ENCODE measurements at regions of chr14 and their contacts with region 1.

Region 1: GRCh38 chr14:71555654-71556559 is 376.3 kb upstream of the RGS6 start:
- DNase-seq: peak; percentile 65
- H3K4me3 Mint-ChIP-seq: peak overlapping the region; percentile 35
- H3K27ac Mint-ChIP-seq: peak overlapping the region; percentile 92
- H3K4me1 Mint-ChIP-seq: peaks cover 71% of the 10 kb centered on the region
- H3K27me3 Mint-ChIP-seq: no peaks in the 10 kb centered on the region

Region 2: GRCh38 chr14:71138448-71139293 is 417.2 kb before region 1 on chr14:
- intact Hi-C with region 1: loop called (anchors 1 kb)
- DNase-seq: peak; percentile 48
- H3K4me3 Mint-ChIP-seq: no peak overlapping the region
- H3K27ac Mint-ChIP-seq: no peak overlapping the region
- H3K4me1 Mint-ChIP-seq: peaks cover 48% of the 10 kb centered on the region
- H3K27me3 Mint-ChIP-seq: no peaks in the 10 kb centered on the region

Region 3: DNA sequence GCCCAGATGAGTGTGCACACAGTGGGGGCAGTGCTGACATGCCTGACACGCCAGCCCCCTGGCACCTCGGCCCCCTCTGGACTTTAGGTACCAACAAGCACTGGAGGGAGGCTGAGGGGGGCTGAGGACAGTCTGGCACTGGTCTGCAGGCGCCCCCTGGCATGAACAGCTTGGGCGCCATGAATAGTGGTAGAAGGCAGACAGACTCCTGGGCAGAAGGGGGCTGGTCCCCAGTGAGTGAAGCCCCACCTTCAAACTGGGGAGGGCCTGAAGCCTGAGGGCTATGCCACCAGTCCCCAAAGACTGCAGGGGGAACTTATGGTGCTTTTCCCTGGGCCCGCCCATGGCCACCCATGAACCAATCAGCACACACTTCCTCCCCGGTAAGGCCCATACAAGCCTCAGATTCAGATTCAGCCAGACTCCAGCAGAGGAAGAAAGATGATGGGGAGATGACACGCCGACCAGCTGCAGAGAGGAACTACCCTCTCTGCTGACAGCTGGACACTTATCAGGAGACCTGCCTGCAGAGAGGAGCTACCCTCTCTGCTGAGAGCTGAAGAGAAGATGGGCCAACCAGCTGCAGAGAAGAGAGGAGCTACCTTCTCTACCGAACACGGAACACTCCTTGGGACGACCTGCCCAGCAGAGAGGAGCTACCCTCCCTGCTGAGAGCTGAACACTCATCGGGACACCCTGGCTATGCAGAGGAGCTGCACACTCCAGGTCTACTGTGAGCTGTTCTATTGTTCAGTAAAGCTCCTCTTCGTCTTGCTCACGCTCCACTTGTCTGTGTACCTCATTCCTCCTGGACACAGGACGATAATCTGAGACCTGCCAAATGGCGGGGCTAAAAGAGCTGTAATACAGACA is 324.1 kb before region 1 on chr14:
- intact Hi-C with region 1: no loop called
- DNase-seq: no peak
- H3K4me3 Mint-ChIP-seq: no peak overlapping the region
- H3K27ac Mint-ChIP-seq: no peak overlapping the region
- H3K4me1 Mint-ChIP-seq: peaks cover 8% of the 10 kb centered on the region
- H3K27me3 Mint-ChIP-seq: peaks cover 14% of the 10 kb centered on the region

Region 4: GRCh38 chr14:71320107-71320733 is 235.7 kb before region 1 on chr14:
- intact Hi-C with region 1: loop called (anchors 2 kb)
- DNase-seq: peak; percentile 99
- H3K4me3 Mint-ChIP-seq: peak within 1 kb of the TSS; percentile 92
- H3K27ac Mint-ChIP-seq: peak within 1 kb of the TSS; percentile 91
- H3K4me1 Mint-ChIP-seq: peaks cover 42% of the 10 kb centered on the region
- H3K27me3 Mint-ChIP-seq: no peaks in the 10 kb centered on the region

Region 5: DNA sequence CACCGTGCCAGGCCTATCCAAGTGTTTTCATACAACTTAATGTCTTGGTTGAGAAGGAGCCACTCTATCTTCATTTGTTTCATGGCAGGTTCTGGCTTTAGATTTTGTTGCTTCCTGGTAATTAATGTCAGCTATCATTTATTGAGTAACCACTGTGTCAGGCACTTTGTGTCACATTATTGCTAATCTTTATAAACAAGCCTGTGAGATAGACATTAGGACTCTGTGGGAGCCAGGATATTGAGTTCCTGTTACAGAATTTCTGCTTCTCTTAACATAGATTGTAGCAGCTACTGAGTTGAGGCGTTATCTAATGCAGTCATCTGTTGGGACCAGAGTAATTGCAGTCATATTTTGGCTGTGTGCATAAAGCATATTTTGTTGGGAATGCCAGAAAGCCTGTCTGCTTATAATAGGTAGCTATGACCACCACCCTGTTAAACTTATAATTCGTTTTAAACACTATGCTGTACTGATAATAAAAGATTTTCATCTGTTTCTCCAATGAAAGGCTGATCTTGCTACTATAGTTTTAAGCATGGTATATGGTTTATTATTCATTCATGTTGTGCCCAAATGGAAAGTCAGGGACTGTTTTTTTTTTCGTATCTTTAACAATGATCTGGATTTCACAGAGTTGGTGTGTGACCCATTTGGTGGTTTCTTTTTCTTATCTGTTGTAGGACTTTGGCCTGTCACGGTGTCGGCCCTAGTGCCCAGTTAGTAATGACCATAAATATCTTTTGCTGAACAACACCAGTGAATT is 216.1 kb before region 1 on chr14:
- intact Hi-C with region 1: no loop called
- DNase-seq: no peak
- H3K4me3 Mint-ChIP-seq: no peak overlapping the region
- H3K27ac Mint-ChIP-seq: no peak overlapping the region
- H3K4me1 Mint-ChIP-seq: peaks cover 31% of the 10 kb centered on the region
- H3K27me3 Mint-ChIP-seq: no peaks in the 10 kb centered on the region

Region 6: DNA sequence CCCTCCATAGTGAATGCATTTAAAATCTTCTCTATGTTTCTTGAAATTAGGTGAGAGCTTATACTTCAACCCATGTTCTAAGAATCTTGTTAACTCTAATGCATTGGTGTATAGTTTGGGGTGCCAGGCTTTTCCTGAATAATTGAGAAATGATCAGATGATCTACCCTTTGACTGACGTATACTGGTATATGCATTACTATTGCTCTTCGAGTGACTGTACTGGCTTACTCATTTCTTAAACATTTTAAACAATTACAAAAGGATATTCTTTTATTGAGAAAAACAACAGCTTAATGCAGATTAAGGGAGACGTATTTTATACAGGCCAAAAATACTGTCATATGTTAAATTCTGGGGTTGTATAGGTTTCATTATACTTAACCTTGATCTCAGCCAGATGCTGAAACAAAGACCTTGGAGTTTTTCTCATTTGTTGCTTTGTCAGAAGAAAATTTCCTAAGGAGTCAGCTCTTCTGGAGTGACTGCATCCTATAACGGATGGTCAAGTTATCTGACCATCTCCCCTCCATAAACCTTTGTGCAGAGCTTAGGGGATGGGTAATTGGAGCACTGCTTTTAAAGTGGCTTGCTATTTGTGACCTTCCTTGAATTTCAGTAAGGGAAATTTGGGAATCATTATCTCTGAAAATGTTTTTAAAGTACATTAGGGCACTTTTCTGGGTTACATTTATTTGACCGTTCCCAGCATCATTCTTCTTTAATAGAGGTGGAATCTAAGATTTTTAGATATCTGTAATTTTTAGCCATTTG is 141.1 kb before region 1 on chr14:
- intact Hi-C with region 1: loop called (anchors 2 kb)
- DNase-seq: no peak
- H3K4me3 Mint-ChIP-seq: no peak overlapping the region
- H3K27ac Mint-ChIP-seq: no peak overlapping the region
- H3K4me1 Mint-ChIP-seq: peaks cover 38% of the 10 kb centered on the region
- H3K27me3 Mint-ChIP-seq: no peaks in the 10 kb centered on the region

Region 7: DNA sequence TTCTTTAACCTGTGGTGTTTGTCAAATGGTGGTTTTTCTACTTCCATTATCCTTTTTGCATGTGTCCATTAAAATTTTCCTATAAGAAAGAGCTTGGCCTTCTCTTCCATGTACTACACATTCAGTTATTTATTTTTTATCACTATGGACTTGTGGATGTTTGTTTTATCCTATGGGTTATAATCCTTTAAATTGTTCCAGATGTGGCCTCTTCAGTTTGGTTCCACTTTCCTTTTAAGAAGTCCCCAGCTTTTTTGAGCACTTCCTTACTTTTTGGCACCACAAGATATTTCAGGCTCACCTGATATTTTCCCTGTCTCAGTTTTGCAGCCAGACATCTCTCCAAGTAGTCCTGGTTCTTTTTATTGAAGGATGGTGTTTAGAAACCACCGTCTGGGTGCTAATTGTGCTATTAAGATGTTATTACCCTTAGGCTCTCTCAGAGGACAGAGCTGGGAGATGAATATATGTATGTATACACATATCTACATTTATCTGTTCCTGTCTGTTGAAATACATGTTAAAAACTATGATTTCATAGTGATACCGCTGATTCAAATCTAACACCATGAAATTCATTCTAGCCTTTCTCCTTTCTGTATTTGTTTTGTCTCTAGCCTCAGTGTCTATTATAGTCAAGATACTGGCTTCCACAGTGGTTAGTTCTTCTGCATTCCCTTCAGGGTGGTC is 32.1 kb before region 1 on chr14:
- intact Hi-C with region 1: loop called (anchors 1 kb)
- DNase-seq: no peak
- H3K4me3 Mint-ChIP-seq: no peak overlapping the region
- H3K27ac Mint-ChIP-seq: peak overlapping the region; percentile 63
- H3K4me1 Mint-ChIP-seq: peaks cover 28% of the 10 kb centered on the region
- H3K27me3 Mint-ChIP-seq: no peaks in the 10 kb centered on the region

Region 8: GRCh38 chr14:71566276-71566675 is 10.4 kb after region 1 on chr14:
- intact Hi-C with region 1: no loop called
- DNase-seq: no peak
- H3K4me3 Mint-ChIP-seq: no peak overlapping the region
- H3K27ac Mint-ChIP-seq: no peak overlapping the region
- H3K4me1 Mint-ChIP-seq: peaks cover 12% of the 10 kb centered on the region
- H3K27me3 Mint-ChIP-seq: no peaks in the 10 kb centered on the region

Region 9: DNA sequence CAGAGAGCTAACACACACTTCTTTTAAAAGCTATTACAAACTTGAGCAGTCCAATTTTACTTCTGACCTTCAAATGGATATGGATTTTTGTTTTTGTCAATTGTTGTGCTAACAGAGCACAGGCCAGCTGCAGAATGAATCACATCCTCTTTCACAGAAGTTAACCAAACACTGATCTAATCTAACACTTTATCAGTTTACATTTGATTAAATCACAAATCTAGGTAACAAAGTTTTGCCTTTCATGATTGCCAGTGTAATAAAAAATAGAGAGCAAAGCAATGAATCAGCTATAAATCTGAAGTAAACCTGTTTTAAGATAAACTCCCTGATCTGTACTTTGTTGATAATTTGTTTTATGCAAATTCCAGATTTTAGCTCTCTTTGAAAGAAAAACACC is 103.3 kb after region 1 on chr14:
- intact Hi-C with region 1: loop called (anchors 5 kb)
- DNase-seq: no peak
- H3K4me3 Mint-ChIP-seq: no peak overlapping the region
- H3K27ac Mint-ChIP-seq: peak overlapping the region; percentile 9
- H3K4me1 Mint-ChIP-seq: peaks cover 33% of the 10 kb centered on the region
- H3K27me3 Mint-ChIP-seq: no peaks in the 10 kb centered on the region

Region 10: DNA sequence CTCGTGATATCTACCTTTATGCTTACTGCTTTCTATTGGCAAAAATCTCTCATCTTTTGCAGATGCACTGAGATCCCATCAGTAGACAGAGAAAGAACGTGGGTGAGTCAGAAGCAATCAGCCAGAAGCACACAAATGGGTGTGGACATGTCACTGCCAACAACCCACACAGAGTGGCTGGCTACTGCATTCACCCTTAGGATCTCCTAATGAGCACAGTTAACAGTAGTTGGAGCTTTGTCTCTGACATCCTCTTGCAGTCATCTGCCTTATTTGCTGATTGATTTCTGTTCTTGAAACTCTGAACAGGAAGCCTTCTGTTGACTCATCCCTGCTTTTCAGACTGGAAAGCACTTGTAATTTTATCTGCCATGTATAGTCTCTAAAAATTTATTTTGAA is 493.5 kb after region 1 on chr14:
- intact Hi-C with region 1: loop called (anchors 10 kb)
- DNase-seq: peak; percentile 48
- H3K4me3 Mint-ChIP-seq: no peak overlapping the region
- H3K27ac Mint-ChIP-seq: peak overlapping the region; percentile 72
- H3K4me1 Mint-ChIP-seq: peaks cover 34% of the 10 kb centered on the region
- H3K27me3 Mint-ChIP-seq: peaks cover 15% of the 10 kb centered on the region

Region 11: DNA sequence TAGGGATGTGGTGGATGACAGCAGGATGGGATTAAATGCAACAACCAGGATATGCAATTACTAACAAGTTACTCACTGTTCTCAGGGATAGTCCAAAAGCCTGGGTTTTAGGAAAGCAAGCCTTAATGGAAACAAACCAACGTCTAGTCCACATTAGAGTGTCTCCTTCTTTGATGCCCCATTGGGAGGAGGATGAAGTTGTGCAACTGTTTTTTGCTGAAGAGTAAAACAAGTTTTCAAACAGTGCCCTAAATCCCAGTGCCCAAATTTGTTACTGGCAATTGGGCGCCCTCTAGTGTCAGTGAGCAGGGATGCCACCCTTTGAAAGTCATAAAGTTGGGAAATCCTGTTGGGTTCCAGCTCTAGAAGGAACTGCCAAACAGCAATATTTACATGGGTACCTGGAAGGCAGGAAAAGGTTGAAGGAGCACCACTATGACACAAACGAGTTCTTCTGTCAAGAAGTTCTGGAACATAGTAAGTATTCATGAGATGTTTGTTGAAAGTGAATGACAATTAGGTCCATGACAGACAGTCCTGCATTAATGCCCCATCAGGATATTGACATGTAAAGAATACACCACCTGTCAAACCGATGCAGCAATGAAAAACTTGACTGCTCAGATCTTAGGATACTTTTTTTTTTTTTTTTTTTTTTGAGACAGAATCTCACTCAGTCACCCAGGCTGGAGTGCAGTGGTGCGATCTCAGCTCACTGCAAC is 1349.1 kb after region 1 on chr14:
- intact Hi-C with region 1: no loop called
- DNase-seq: peak; percentile 34
- H3K4me3 Mint-ChIP-seq: no peak overlapping the region
- H3K27ac Mint-ChIP-seq: no peak overlapping the region
- H3K4me1 Mint-ChIP-seq: peaks cover 12% of the 10 kb centered on the region
- H3K27me3 Mint-ChIP-seq: peaks cover 55% of the 10 kb centered on the region